ENCODE measurements at regions of chr2 and their contacts with region 1.

Region 1: GRCh38 chr2:159118115-159118858 is 149.8 kb downstream of the TANC1 start:
- DNase-seq: peak; percentile 87 to 88
- H3K4me3 ChIP-seq: no peak overlapping the region
- H3K27ac ChIP-seq: no peak overlapping the region
- H3K4me1 ChIP-seq: peaks cover 0 to 23% (median 6%) of the 10 kb centered on the region in 4 donors
- H3K27me3 ChIP-seq: no peaks in the 10 kb centered on the region
- CTCF ChIP-seq: peak; percentile 89 to 94

Region 2: GRCh38 chr2:158828493-158829164 is 289.7 kb before region 1 on chr2:
- intact Hi-C with region 1: no loop called
- DNase-seq: no peak
- H3K4me3 ChIP-seq: no peak overlapping the region
- H3K27ac ChIP-seq: peak overlapping the region in 1 of 2 donors; percentile 0
- H3K4me1 ChIP-seq: peaks cover 0 to 18% (median 10%) of the 10 kb centered on the region in 4 donors
- H3K27me3 ChIP-seq: no peaks in the 10 kb centered on the region
- CTCF ChIP-seq: no peak

Region 3: DNA sequence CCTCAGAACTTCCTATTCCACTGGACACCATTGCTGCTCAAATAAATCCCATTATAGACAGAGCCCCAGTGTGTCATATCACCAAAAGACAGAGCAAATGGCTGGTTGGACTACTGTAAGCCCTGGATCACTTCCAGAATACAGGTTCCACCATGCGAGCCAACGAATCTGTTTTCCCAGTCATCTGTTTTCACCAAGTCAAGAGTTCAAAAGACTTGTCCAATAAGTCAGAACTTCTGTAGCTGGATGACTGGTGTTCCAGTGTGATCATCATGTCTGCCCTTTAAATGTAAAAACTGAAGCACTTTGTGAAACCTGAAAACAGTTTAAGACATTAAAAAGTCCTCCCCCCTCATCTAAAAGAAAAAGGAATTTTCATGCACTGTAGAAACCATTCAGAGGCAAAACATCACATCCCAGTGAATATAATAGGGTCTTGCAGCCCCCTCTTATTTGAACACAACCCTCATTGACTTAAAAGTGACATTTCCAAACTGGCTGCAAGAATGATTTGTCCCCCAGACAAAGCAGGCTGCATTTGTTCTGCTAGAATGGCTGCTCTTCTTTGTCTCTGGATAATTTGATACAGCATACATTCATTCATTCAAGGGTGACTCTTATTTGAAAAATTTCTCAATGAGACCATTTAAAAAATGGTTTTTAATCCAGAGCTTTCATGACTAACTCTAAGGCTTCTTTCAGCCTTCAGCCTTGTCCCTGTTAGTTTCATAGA is 214.4 kb before region 1 on chr2:
- intact Hi-C with region 1: loop called (anchors 1 kb)
- DNase-seq: no peak
- H3K4me3 ChIP-seq: no peak overlapping the region
- H3K27ac ChIP-seq: no peak overlapping the region
- H3K4me1 ChIP-seq: no peaks in the 10 kb centered on the region
- H3K27me3 ChIP-seq: no peaks in the 10 kb centered on the region
- CTCF ChIP-seq: no peak

Region 4: DNA sequence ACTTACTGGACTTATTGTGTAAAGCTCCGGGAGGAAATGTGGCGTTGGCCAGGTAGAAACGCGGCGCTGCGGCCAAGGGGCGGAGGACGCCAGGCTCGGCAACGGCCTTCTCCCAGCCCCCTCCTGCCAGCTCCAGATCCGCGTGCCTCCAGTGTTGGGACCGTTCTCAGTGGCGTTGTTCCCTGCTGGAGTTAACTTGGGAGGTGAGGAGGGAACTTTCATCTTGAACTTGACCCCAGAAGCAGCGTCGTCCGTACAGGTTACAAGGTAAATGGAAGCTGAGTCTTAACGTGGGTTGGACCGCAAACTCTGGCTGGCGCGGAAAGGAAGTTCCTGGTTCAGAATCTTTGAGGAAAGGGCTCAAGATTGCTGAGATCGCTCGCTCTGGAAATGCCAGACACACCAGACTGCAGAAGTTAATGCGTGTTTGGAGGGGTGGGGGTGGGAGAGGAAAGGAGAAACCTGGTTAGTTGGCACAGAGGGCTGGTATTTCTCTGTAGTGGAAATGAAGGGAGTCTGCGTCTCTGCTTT is 148.5 kb before region 1 on chr2:
- intact Hi-C with region 1: loop called (anchors 2 kb)
- DNase-seq: peak; percentile 34 to 68
- H3K4me3 ChIP-seq: peak overlapping the region; percentile 81 to 97
- H3K27ac ChIP-seq: peak overlapping the region; percentile 90 to 91
- H3K4me1 ChIP-seq: peaks cover 0 to 45% (median 16%) of the 10 kb centered on the region in 4 donors
- H3K27me3 ChIP-seq: no peaks in the 10 kb centered on the region
- CTCF ChIP-seq: no peak

Region 5: DNA sequence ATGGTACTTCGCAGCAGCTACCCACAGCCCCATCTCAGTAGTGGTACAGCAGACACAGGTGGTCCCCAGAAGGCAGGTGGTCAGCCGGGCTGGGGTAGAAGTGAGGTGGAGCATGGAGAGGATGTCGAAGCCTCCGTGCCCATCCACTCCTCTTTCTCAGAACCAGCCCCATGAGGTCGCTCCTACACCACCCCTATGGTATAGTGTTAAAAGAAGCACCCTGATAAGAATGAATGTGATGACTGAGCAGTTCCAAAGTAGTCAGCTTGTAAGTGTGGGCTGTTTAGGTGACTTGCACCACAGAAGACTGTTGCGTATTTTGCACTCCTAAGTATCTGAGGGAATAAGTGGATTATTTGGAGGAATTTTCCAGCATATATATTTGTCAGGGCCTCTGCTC is 56.9 kb after region 1 on chr2:
- intact Hi-C with region 1: no loop called
- DNase-seq: no peak
- H3K4me3 ChIP-seq: no peak overlapping the region
- H3K27ac ChIP-seq: no peak overlapping the region
- H3K4me1 ChIP-seq: no peaks in the 10 kb centered on the region
- H3K27me3 ChIP-seq: no peaks in the 10 kb centered on the region
- CTCF ChIP-seq: no peak

Region 6: DNA sequence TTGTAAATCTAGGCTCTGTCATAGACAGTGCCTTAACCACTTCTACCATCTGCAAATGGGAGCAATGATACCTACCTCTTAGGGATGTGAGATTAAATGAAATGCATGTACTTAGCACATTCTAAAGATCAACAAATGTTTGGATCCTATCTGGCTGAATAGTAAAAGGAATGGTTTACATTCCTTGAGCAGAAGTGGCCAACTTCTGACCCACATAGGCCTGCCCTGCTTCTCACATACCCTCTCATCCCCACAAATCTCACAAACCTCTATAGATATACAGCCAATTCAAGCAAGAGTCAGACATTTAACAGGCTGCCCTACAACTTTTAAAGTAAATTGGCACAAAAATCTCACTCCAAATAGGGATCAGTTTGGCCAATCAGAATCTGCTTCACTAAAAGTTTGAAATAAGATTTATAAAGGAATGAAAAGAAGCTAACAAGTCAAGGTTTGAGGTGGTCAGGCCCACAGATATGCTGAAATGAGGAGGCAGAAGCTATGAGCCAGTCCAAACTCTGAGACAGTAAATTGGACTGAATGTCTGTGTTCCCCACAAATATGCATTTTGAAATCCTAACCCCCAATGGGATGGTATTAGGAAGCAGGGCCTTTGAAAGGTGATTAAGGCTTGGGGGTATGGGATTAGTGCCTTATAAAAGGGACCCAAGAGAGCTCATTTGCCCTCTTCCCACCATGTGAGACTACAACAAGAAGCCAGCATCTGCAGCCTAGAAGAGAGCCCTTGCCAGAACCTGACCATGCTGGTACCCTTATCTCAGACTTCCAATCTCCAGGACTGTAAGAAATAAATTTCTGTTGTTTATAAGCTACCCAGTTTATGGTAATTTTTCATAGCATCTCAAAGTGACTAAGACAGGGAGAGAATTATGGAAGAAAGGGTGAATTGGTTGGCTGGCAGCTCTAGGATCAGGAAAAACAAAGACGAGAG is 1603.1 kb after region 1 on chr2:
- intact Hi-C with region 1: no loop called
- DNase-seq: no peak
- H3K4me3 ChIP-seq: no peak overlapping the region
- H3K27ac ChIP-seq: no peak overlapping the region
- H3K4me1 ChIP-seq: no peaks in the 10 kb centered on the region
- H3K27me3 ChIP-seq: no peaks in the 10 kb centered on the region
- CTCF ChIP-seq: no peak